ENCODE measurements at regions of chr19 and their contacts with region 1.

Region 1: GRCh38 chr19:3606690-3607289 is at the start of gene TBXA2R:
- DNase-seq: peak; percentile 77
- ATAC-seq: peak; percentile 53
- H3K4me3 Mint-ChIP-seq: peak within 1 kb of the TSS; percentile 68
- H3K27ac Mint-ChIP-seq: no peak within 1 kb of the TSS
- H3K4me1 Mint-ChIP-seq: peaks cover 11% of the 10 kb centered on the region
- H3K27me3 Mint-ChIP-seq: no peaks in the 10 kb centered on the region
- CTCF ChIP-seq: no peak
- total RNA-seq, gene TBXA2R: 1.0 to 1.4 TPM (median 1.3 TPM) in 3 replicates

Region 2: GRCh38 chr19:3593156-3593555 is 13.6 kb before region 1 on chr19:
- CTCF ChIA-PET with region 1: interaction called, 12 read pairs
- POLR2A ChIA-PET with region 1: no interaction called
- DNase-seq: peak; percentile 69
- ATAC-seq: peak; percentile 95
- H3K4me3 Mint-ChIP-seq: no peak overlapping the region
- H3K27ac Mint-ChIP-seq: no peak overlapping the region
- H3K4me1 Mint-ChIP-seq: no peaks in the 10 kb centered on the region
- H3K27me3 Mint-ChIP-seq: peaks cover 27% of the 10 kb centered on the region
- CTCF ChIP-seq: no peak

Region 3: GRCh38 chr19:3618144-3618810 is 11.5 kb after region 1 on chr19:
- CTCF ChIA-PET with region 1: interaction called, 11 read pairs
- POLR2A ChIA-PET with region 1: no interaction called
- DNase-seq: peak; percentile 80
- ATAC-seq: peak; percentile 78
- H3K4me3 Mint-ChIP-seq: no peak overlapping the region
- H3K27ac Mint-ChIP-seq: no peak overlapping the region
- H3K4me1 Mint-ChIP-seq: 0 out of 2 replicates have a peak, but pooled peaks cover 3% of the 10 kb centered on the region
- H3K27me3 Mint-ChIP-seq: no peaks in the 10 kb centered on the region
- CTCF ChIP-seq: peak; percentile 92

Measured in WTC11 (cell line).